Endothelial cell of umbilical vein (primary cell): ENCODE measurements at regions of chr11 and their contacts with region 1.

Region 1: GRCh38 chr11:3854977-3855807 is at the start of gene STIM1:
- DNase-seq: peak; percentile 94
- H3K4me3 ChIP-seq: peak within 1 kb of the TSS; percentile 33 to 88 (median 68)
- H3K27ac ChIP-seq: peak within 1 kb of the TSS; percentile 67
- H3K4me1 ChIP-seq: peaks cover 15% of the 10 kb centered on the region
- H3K27me3 ChIP-seq: no peaks in the 10 kb centered on the region
- CTCF ChIP-seq: peak; percentile 95 to 97
- POLR2A ChIP-seq: peak; percentile 49
- total RNA-seq, gene STIM1: 30.9 and 32.7 TPM in 2 replicates

Region 2: GRCh38 chr11:3797329-3798095 is 57.7 kb before region 1 on chr11 and contains the start of gene NUP98:
- CTCF ChIA-PET with region 1: no interaction called
- POLR2A ChIA-PET with region 1: no interaction called
- dilution Hi-C with region 1: no loop called
- intact Hi-C with region 1: no loop called
- DNase-seq: peak; percentile 100
- H3K4me3 ChIP-seq: peak within 1 kb of the TSS; percentile 72 to 99 (median 90)
- H3K27ac ChIP-seq: peak within 1 kb of the TSS; percentile 76
- H3K4me1 ChIP-seq: peaks cover 15% of the 10 kb centered on the region
- H3K27me3 ChIP-seq: no peaks in the 10 kb centered on the region
- CTCF ChIP-seq: peak in 1 of 2 donors; percentile 2
- POLR2A ChIP-seq: peak; percentile 90
- total RNA-seq, gene NUP98: 80.8 and 92.7 TPM in 2 replicates

Region 3: GRCh38 chr11:3867209-3868091 is 12.3 kb after region 1 on chr11:
- CTCF ChIA-PET with region 1: interaction called, 35 read pairs
- POLR2A ChIA-PET with region 1: interaction called, 4 read pairs
- dilution Hi-C with region 1: no loop called
- intact Hi-C with region 1: loop called (anchors 1 kb)
- DNase-seq: peak; percentile 76
- H3K4me3 ChIP-seq: no peak overlapping the region
- H3K27ac ChIP-seq: peak overlapping the region; percentile 78
- H3K4me1 ChIP-seq: peaks cover 38% of the 10 kb centered on the region
- H3K27me3 ChIP-seq: no peaks in the 10 kb centered on the region
- CTCF ChIP-seq: no peak
- POLR2A ChIP-seq: no peak

Region 4: DNA sequence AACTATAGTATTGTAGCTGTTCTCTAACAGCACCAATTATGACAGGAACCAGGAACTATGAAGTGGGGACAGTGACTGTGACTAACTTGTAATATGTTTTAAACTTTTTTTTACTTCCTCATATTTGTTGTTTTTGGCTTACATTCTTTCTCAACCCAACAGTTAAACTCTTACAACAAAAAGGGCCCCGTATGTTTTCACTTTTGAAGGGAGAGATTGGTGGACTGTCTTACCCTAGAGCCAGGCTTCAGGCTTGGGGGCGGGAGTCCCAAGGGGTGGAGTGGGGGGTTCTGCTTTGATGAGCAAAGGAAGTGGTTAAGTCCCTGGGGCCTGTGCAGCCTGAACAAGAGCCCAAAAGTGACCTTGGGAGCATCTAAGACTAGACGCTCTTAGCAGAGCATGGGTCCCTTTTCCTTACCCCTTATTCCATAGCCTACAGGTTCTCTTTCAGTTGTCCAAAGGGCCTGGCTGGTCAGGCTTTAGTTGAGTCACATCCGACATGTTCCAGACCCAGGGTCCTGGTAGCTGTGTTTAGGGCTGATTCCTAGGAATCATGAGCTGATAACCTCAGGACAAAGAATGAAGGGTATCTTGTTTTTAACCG is 39.0 kb after region 1 on chr11:
- CTCF ChIA-PET with region 1: interaction called, 12 read pairs
- POLR2A ChIA-PET with region 1: no interaction called
- dilution Hi-C with region 1: no loop called
- intact Hi-C with region 1: no loop called
- DNase-seq: peak; percentile 15
- H3K4me3 ChIP-seq: no peak overlapping the region
- H3K27ac ChIP-seq: no peak overlapping the region
- H3K4me1 ChIP-seq: peaks cover 5% of the 10 kb centered on the region
- H3K27me3 ChIP-seq: no peaks in the 10 kb centered on the region
- CTCF ChIP-seq: no peak
- POLR2A ChIP-seq: no peak

Region 5: DNA sequence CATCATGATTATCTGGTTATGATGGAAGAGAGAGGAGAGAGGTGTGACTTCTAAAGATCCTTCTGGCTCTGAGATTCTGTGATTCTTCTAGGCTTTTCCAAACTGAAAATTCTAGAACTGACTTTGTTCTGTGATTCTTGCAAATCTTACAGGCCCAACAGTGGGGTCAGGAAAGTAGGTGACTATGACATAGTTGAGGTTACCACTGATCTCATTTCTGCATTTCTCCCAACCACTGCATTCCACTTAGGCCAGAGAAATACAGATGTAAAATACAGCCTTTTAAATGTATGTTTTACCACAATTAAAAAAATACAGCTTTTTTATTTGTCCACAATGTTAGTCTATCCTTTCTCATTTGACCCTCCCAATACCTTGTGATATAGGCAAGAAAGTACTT is 84.0 kb after region 1 on chr11:
- CTCF ChIA-PET with region 1: interaction called, 12 read pairs
- POLR2A ChIA-PET with region 1: no interaction called
- dilution Hi-C with region 1: no loop called
- intact Hi-C with region 1: no loop called
- DNase-seq: no peak
- H3K4me3 ChIP-seq: no peak overlapping the region
- H3K27ac ChIP-seq: no peak overlapping the region
- H3K4me1 ChIP-seq: peaks cover 7% of the 10 kb centered on the region
- H3K27me3 ChIP-seq: no peaks in the 10 kb centered on the region
- CTCF ChIP-seq: no peak
- POLR2A ChIP-seq: no peak

Region 6: DNA sequence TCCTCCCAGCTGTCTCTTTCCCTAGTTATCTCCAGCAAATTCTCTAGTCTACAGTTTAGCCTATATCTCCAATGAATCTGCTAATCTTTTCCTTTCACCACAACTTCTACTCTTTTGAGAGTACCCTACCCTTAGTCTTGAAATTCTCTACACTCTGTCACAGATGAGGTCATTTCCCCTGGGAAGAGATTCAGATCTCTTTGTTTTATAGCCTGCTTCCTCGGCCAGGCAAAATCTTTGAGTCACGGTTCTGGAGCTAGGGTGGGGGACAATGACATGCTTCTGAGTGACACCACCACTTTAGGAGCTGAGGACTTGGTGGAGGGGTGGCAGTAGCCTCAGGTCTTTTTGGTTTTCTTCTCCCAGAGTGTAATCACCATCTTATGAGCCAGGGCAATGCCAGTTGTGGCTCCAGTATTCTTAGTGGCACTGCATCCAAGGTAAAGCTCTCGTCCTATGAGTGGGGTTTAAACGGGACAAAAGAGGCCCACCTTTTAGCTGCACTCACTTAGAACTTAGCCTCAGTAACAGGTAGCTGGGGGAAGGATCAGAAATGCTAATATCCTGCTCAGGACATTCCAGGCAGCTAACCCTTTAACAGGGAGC is 140.9 kb after region 1 on chr11:
- CTCF ChIA-PET with region 1: interaction called, 14 read pairs
- POLR2A ChIA-PET with region 1: no interaction called
- dilution Hi-C with region 1: no loop called
- intact Hi-C with region 1: no loop called
- DNase-seq: peak; percentile 82
- H3K4me3 ChIP-seq: no peak overlapping the region
- H3K27ac ChIP-seq: peak overlapping the region; percentile 68
- H3K4me1 ChIP-seq: peaks cover 16% of the 10 kb centered on the region
- H3K27me3 ChIP-seq: no peaks in the 10 kb centered on the region
- CTCF ChIP-seq: no peak
- POLR2A ChIP-seq: no peak

Region 7: DNA sequence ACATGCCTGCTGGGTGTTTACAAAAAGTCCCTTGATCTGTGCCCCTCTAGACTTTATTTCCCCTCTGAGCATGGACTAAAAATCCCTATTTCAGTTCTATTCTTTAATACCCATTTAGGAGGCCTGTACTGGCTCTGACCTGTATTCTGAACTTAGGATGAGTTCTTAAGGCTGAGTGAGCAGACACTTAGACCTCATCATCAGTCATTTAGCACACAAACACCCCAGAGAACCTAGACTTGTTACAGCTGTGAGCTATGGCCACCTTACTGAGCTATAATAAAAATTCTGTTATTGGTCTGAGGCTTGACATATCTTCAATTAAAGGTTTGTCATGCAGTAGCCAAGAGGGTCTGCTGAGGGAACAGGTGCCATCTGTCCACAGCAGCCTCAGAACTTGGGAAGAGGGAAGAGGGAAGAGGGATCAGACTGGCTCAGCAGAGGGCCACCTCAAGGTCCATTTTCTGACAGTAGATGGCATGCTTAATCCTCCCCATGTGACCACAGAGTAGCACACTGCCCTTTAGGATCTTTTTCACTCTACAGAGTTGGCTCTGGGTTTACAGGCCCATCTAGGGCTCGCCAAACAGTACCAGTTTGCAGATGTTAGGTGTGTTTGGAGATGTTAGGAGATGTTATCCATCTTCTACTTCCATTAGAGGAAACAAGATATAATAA is 209.2 kb after region 1 on chr11:
- CTCF ChIA-PET with region 1: interaction called, 871 read pairs
- POLR2A ChIA-PET with region 1: interaction called, 3 read pairs
- dilution Hi-C with region 1: loop called (anchors 25 kb)
- intact Hi-C with region 1: no loop called
- DNase-seq: no peak
- H3K4me3 ChIP-seq: no peak overlapping the region
- H3K27ac ChIP-seq: no peak overlapping the region
- H3K4me1 ChIP-seq: no peaks in the 10 kb centered on the region
- H3K27me3 ChIP-seq: no peaks in the 10 kb centered on the region
- CTCF ChIP-seq: no peak
- POLR2A ChIP-seq: no peak